Caco-2 (cell line): ENCODE measurements at regions of chr11 and their contacts with region 1.

Region 1: GRCh38 chr11:57515332-57516060 is at the start of gene SLC43A1:
- DNase-seq: peak; percentile 66 to 75
- H3K4me3 ChIP-seq: peak within 1 kb of the TSS; percentile 79
- H3K4me3 Mint-ChIP-seq: peak within 1 kb of the TSS; percentile 91
- H3K27ac Mint-ChIP-seq: peak within 1 kb of the TSS; percentile 82
- H3K4me1 ChIP-seq: peaks cover 8% of the 10 kb centered on the region
- H3K4me1 Mint-ChIP-seq: no peaks in the 10 kb centered on the region
- H3K27me3 ChIP-seq: no peaks in the 10 kb centered on the region
- H3K27me3 Mint-ChIP-seq: no peaks in the 10 kb centered on the region
- CTCF ChIP-seq: no peak
- total RNA-seq, gene SLC43A1: 71.7 and 80.5 TPM in 2 replicates

Region 2: DNA sequence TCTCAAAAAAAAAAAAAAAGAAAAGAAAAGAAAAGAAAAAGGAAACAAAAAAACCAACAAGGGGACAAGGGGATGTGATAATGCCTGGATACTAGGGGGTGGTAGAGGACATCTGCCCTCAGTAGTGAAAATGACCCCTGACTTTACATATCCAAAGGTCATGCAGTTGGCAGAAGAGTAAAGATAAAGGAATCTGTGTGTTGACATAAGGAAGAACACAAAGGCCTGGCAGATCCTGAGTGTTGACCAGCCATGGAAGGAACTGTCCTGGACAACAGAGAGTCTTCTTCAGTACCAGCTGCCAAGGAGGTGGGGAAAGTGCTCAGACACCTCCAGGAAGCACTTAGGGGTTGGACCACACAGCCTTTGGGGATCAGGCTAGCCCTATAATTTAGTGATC is 12.6 kb before region 1 on chr11:
- CTCF ChIA-PET with region 1: interaction called, 6 read pairs
- POLR2A ChIA-PET with region 1: interaction called, 5 read pairs
- intact Hi-C with region 1: loop called (anchors 1 kb)
- DNase-seq: peak in 1 of 2 experiments; percentile 50
- H3K4me3 ChIP-seq: no peak overlapping the region
- H3K4me3 Mint-ChIP-seq: no peak overlapping the region
- H3K27ac Mint-ChIP-seq: peak overlapping the region; percentile 48
- H3K4me1 ChIP-seq: peaks cover 51% of the 10 kb centered on the region
- H3K4me1 Mint-ChIP-seq: peaks cover 42% of the 10 kb centered on the region
- H3K27me3 ChIP-seq: no peaks in the 10 kb centered on the region
- H3K27me3 Mint-ChIP-seq: no peaks in the 10 kb centered on the region
- CTCF ChIP-seq: no peak